HCT116 (cell line): ENCODE measurements at regions of chr11 and their contacts with region 1.

Region 1: DNA sequence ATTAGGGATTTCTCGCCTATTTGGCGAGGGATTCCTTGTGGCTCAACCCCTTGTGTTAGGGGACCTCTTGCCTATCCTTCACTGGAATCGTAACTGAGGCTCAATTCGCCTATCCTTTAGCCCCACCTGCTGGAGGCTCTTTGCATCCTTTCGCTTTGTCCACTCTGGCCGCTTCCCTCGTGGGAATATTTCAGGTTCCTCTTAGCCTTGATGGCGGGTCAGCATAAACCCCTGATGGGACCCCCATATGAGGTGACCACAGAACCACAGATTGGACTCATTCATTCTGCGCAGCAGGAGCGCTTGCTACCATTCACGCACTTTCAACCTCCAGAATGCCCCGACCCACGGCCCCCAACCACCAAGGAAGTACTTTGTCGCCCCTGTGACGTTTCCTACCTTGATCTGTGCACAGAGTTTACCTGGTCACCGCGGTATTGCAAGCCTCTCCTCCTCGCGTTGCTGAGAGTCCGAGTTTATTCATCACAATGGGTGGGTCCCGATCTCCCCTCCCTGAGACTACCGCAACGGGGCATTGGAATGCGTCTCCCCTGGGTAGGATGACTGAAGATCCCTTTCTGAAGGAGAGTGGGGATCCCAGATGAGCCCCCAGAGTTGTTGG is at the start of gene OR52N2:
- DNase-seq: peak; percentile 61
- ATAC-seq: peak; percentile 97
- H3K4me3 ChIP-seq: peak within 1 kb of the TSS in 1 of 2 experiments; percentile 11; a peak in 2 of 4 replicates
- H3K27ac ChIP-seq: no peak within 1 kb of the TSS
- H3K4me1 ChIP-seq: peaks cover 0 to 4% of the 10 kb centered on the region in 2 experiments; a peak in 1 of 4 replicates
- H3K27me3 ChIP-seq: peaks cover 61% of the 10 kb centered on the region
- CTCF ChIP-seq: peak; percentile 70 to 85 (median 85)
- POLR2A ChIP-seq: no peak
- RAD21 ChIP-seq: peak; percentile 88
- total RNA-seq, gene OR52N2: not detected

Region 2: GRCh38 chr11:4181782-4182721 is 1626.6 kb before region 1 on chr11:
- CTCF ChIA-PET with region 1: no interaction called
- POLR2A ChIA-PET with region 1: no interaction called
- RAD21 ChIA-PET with region 1: no interaction called
- intact Hi-C with region 1: loop called (anchors 2 kb)
- DNase-seq: peak; percentile 57
- ATAC-seq: peak; percentile 96
- H3K4me3 ChIP-seq: no peak overlapping the region
- H3K27ac ChIP-seq: no peak overlapping the region
- H3K4me1 ChIP-seq: peaks cover 0 to 1% of the 10 kb centered on the region in 2 experiments; a peak in 1 of 4 replicates
- H3K27me3 ChIP-seq: no peaks in the 10 kb centered on the region
- CTCF ChIP-seq: peak; percentile 75 to 95 (median 88)
- POLR2A ChIP-seq: no peak
- RAD21 ChIP-seq: peak; percentile 91

Region 3: GRCh38 chr11:4636962-4637661 is 1171.5 kb before region 1 on chr11 and contains the start of gene OR51D1:
- CTCF ChIA-PET with region 1: interaction called, 6 read pairs
- POLR2A ChIA-PET with region 1: no interaction called
- RAD21 ChIA-PET with region 1: no interaction called
- intact Hi-C with region 1: loop called (anchors 1 kb)
- DNase-seq: peak; percentile 43
- ATAC-seq: peak; percentile 98
- H3K4me3 ChIP-seq: no peak within 1 kb of the TSS
- H3K27ac ChIP-seq: no peak within 1 kb of the TSS
- H3K4me1 ChIP-seq: no peaks in the 10 kb centered on the region
- H3K27me3 ChIP-seq: peaks cover 43% of the 10 kb centered on the region
- CTCF ChIP-seq: peak; percentile 44 to 88 (median 81); a peak in 5 of 6 replicates
- POLR2A ChIP-seq: no peak
- RAD21 ChIP-seq: peak; percentile 73
- total RNA-seq, gene OR51D1: not detected

Region 4: DNA sequence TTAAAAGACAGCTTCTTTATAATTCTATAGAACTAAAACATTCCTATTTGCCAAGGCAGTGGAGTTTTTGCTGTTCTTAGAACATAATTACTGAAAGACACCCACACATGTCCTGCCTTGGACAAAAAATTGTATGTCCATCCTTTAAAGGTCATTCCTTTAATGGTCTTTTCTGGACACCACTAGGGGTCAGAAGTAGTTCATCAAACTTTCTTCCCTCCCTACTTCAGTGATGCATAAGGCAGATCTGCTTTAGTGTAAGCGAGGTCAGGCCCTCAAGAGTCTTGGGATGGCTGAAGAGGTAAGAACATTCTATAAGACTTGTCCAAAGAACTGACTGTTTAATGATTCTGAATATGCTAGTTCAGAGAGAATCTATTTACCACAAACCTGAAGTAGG is 603.8 kb before region 1 on chr11:
- CTCF ChIA-PET with region 1: no interaction called
- POLR2A ChIA-PET with region 1: no interaction called
- RAD21 ChIA-PET with region 1: no interaction called
- intact Hi-C with region 1: loop called (anchors 2 kb)
- DNase-seq: peak; percentile 68
- ATAC-seq: peak; percentile 99
- H3K4me3 ChIP-seq: no peak overlapping the region
- H3K27ac ChIP-seq: no peak overlapping the region
- H3K4me1 ChIP-seq: no peaks in the 10 kb centered on the region
- H3K27me3 ChIP-seq: peaks cover 32% of the 10 kb centered on the region
- CTCF ChIP-seq: peak; percentile 54 to 79 (median 77)
- POLR2A ChIP-seq: no peak
- RAD21 ChIP-seq: peak; percentile 94

Region 5: GRCh38 chr11:5476184-5476819 is 332.3 kb before region 1 on chr11:
- CTCF ChIA-PET with region 1: no interaction called
- POLR2A ChIA-PET with region 1: no interaction called
- RAD21 ChIA-PET with region 1: no interaction called
- intact Hi-C with region 1: loop called (anchors 1 kb)
- DNase-seq: peak; percentile 38
- ATAC-seq: peak; percentile 88
- H3K4me3 ChIP-seq: no peak overlapping the region
- H3K27ac ChIP-seq: no peak overlapping the region
- H3K4me1 ChIP-seq: peaks cover 0 to 33% of the 10 kb centered on the region in 2 experiments; a peak in 2 of 4 replicates
- H3K27me3 ChIP-seq: no peaks in the 10 kb centered on the region
- CTCF ChIP-seq: peak; percentile 52 to 89 (median 82); a peak in 5 of 6 replicates
- POLR2A ChIP-seq: no peak
- RAD21 ChIP-seq: peak; percentile 38

Region 6: DNA sequence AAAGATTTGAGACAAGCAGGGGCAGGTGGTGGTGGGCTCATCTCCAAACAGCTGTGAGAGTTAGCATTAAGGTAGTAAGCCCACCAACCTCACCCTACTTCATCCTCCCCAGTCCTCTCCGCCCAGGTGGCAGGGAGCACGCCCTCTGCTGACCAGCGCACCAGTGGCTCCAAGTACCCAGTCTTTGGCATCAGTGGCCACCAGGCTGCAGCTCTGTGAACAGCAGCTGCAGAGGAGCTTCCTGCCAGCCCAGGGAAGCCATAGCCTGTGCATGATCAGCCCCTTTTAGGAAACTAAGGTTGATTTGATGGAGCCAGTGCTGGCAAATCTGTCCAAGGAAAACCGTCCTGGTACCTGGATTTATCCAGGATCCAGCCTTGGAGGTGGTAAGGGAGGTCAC is 490.0 kb after region 1 on chr11:
- CTCF ChIA-PET with region 1: no interaction called
- POLR2A ChIA-PET with region 1: no interaction called
- RAD21 ChIA-PET with region 1: no interaction called
- intact Hi-C with region 1: no loop called
- DNase-seq: peak; percentile 51
- ATAC-seq: peak; percentile 100
- H3K4me3 ChIP-seq: no peak overlapping the region
- H3K27ac ChIP-seq: no peak overlapping the region
- H3K4me1 ChIP-seq: no peaks in the 10 kb centered on the region
- H3K27me3 ChIP-seq: no peaks in the 10 kb centered on the region
- CTCF ChIP-seq: peak; percentile 97 to 100 (median 99)
- POLR2A ChIP-seq: no peak
- RAD21 ChIP-seq: peak; percentile 70